PC-3 (cell line): ENCODE measurements at regions of chr3 and their contacts with region 1.

Region 1: GRCh38 chr3:57409456-57409855 is 117.0 kb upstream of the ASB14 start:
- DNase-seq: no peak
- ATAC-seq: no peak
- H3K4me3 ChIP-seq: no peak overlapping the region
- H3K27ac ChIP-seq: no peak overlapping the region
- H3K4me1 ChIP-seq: peaks cover 16% of the 10 kb centered on the region
- H3K27me3 ChIP-seq: no peaks in the 10 kb centered on the region
- CTCF ChIP-seq: no peak

Region 2: GRCh38 chr3:57397175-57398026 is 12.1 kb before region 1 on chr3:
- CTCF ChIA-PET with region 1: no interaction called
- POLR2A ChIA-PET with region 1: no interaction called
- intact Hi-C with region 1: no loop called
- DNase-seq: peak; percentile 78
- ATAC-seq: peak; percentile 99
- H3K4me3 ChIP-seq: no peak overlapping the region
- H3K27ac ChIP-seq: no peak overlapping the region
- H3K4me1 ChIP-seq: no peaks in the 10 kb centered on the region
- H3K27me3 ChIP-seq: no peaks in the 10 kb centered on the region
- CTCF ChIP-seq: peak; percentile 95

Region 3: GRCh38 chr3:57451150-57451846 is 41.8 kb after region 1 on chr3:
- CTCF ChIA-PET with region 1: no interaction called
- POLR2A ChIA-PET with region 1: no interaction called
- intact Hi-C with region 1: no loop called
- DNase-seq: no peak
- ATAC-seq: no peak; the same call in 1 of the 2 replicates
- H3K4me3 ChIP-seq: no peak overlapping the region
- H3K27ac ChIP-seq: peak overlapping the region; percentile 35
- H3K4me1 ChIP-seq: peaks cover 19% of the 10 kb centered on the region
- H3K27me3 ChIP-seq: no peaks in the 10 kb centered on the region
- CTCF ChIP-seq: no peak

Region 4: GRCh38 chr3:57832900-57833313 is 423.5 kb after region 1 on chr3:
- CTCF ChIA-PET with region 1: no interaction called
- POLR2A ChIA-PET with region 1: no interaction called
- intact Hi-C with region 1: loop called (anchors 10 kb)
- DNase-seq: peak; percentile 4
- ATAC-seq: peak; percentile 55
- H3K4me3 ChIP-seq: no peak overlapping the region
- H3K27ac ChIP-seq: no peak overlapping the region
- H3K4me1 ChIP-seq: no peaks in the 10 kb centered on the region
- H3K27me3 ChIP-seq: no peaks in the 10 kb centered on the region
- CTCF ChIP-seq: no peak

Region 5: GRCh38 chr3:58073301-58074108 is 664.0 kb after region 1 on chr3:
- CTCF ChIA-PET with region 1: no interaction called
- POLR2A ChIA-PET with region 1: no interaction called
- intact Hi-C with region 1: no loop called
- DNase-seq: no peak
- ATAC-seq: no peak
- H3K4me3 ChIP-seq: no peak overlapping the region
- H3K27ac ChIP-seq: no peak overlapping the region
- H3K4me1 ChIP-seq: no peaks in the 10 kb centered on the region
- H3K27me3 ChIP-seq: no peaks in the 10 kb centered on the region
- CTCF ChIP-seq: no peak